ENCODE measurements at regions of chr20 and their contacts with region 1.

Region 1: DNA sequence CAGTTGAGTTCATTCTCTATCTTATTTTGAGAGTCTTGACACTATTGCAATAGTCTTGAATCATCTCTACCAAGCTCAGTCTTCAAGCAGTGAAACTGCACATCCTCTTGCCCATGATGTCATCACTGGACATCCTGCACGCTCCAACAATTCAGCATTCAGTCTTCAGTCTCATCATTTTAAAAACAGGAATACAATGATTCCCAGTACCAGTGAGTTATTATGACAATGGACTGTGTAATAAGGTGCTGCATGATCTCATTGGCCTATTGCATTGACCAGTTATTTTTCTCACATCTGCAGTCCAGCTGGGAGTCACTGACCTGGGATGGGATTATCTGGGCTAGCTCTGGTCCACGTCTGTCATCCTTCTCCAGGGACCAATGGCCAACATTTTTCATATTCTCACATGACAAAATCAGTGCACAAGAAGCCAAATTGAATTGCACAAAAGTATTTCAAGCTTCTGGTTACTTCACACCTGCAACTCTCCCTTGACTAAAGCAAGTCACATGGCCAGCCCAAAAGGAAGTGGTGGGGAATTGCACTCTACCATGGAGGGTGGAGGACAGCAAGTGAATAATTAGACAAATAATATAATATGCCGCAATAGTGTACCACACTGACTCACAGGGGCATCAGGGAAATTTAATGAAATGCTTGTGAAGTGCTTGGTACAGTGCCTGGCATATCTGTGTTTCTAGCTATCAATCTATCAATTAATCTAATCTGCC is 6.4 kb upstream of the CST2 start:
- DNase-seq: no peak
- ATAC-seq: no peak
- H3K4me3 ChIP-seq: no peak overlapping the region
- H3K27ac ChIP-seq: no peak overlapping the region
- H3K4me1 ChIP-seq: no peaks in the 10 kb centered on the region
- H3K27me3 ChIP-seq: no peaks in the 10 kb centered on the region

Region 2: GRCh38 chr20:22586645-22587310 is 1246.2 kb before region 1 on chr20:
- intact Hi-C with region 1: no loop called
- DNase-seq: peak; percentile 55 to 82 (median 70)
- ATAC-seq: peak; percentile 57
- H3K4me3 ChIP-seq: no peak overlapping the region
- H3K27ac ChIP-seq: no peak overlapping the region
- H3K4me1 ChIP-seq: no peaks in the 10 kb centered on the region
- H3K27me3 ChIP-seq: no peaks in the 10 kb centered on the region

Region 3: DNA sequence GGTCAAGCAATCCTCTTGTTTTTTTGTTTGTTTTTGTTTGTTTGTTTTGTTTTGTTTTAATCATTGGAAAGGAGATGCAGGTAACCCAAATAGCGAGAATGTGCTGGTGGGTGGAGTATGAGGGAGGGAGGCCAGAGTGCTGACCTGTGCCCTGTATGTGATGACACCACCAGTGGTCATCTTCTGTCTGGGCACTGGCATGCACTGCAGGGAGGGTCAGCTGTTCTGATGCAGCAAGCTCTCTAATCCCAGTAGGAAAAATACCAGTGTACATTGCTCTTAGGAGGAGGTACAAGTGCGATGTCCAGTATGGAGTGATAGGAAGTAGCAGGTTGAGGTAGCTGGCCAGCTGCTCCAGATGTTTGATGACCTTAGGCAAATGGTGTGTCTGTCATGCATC is 79.4 kb before region 1 on chr20:
- intact Hi-C with region 1: no loop called
- DNase-seq: no peak
- ATAC-seq: no peak
- H3K4me3 ChIP-seq: no peak overlapping the region
- H3K27ac ChIP-seq: no peak overlapping the region
- H3K4me1 ChIP-seq: peaks cover 3% of the 10 kb centered on the region
- H3K27me3 ChIP-seq: no peaks in the 10 kb centered on the region

Region 4: GRCh38 chr20:23776067-23776771 is 56.7 kb before region 1 on chr20:
- intact Hi-C with region 1: loop called in 1 of 4 experiments (anchors 10 kb)
- DNase-seq: no peak
- ATAC-seq: no peak
- H3K4me3 ChIP-seq: no peak overlapping the region
- H3K27ac ChIP-seq: no peak overlapping the region
- H3K4me1 ChIP-seq: no peaks in the 10 kb centered on the region
- H3K27me3 ChIP-seq: no peaks in the 10 kb centered on the region

Measured in right cardiac atrium (tissue), 5 donors.